ENCODE measurements at regions of chr1 and their contacts with region 1.

Region 1: GRCh38 chr1:1115786-1116700 is at the start of gene C1orf159:
- ATAC-seq: peak; percentile 96 to 98 (median 97)
- H3K4me3 ChIP-seq: peak within 1 kb of the TSS; percentile 61 to 97 (median 77)
- H3K27ac ChIP-seq: peak within 1 kb of the TSS in 1 of 2 donors; percentile 5
- H3K4me1 ChIP-seq: peaks cover 4 to 7% of the 10 kb centered on the region in 2 donors
- total RNA-seq, gene C1orf159: 5.8 to 17.9 (median 9.7) TPM

Region 2: DNA sequence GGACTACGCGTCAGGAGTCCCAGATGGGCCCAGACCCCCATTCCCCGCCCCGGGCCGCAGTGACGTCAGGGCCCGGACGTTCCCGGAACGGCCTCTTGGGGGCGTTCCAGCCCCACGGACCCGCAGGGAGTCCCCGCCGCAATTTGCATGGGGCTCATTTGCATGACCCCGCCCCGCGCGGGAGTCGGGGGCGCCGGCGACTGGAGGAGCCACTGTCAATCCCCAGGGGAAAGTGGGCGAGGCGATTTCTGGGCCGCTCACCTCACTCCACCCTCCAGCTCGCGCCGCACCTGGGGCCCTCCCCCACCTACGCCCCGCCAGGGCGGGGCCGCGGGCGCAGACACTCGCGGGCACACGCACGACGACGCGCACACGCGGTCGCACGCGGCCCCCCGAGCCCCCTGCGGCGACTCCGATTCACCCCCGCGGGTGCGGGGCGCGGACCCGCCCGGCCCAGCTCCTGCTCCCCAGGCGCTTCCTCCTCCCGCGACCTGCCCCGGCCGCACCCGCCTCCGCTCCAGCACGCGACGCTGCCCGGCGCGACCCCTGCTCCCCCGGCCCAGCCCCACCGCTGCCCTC is 82.9 kb before region 1 on chr1:
- in situ Hi-C with region 1: loop called in 1 of 9 experiments (anchors 10 kb)
- ATAC-seq: peak; percentile 81 to 97 (median 85)
- H3K4me3 ChIP-seq: peak overlapping the region; percentile 35 to 53 (median 37)
- H3K27ac ChIP-seq: peak overlapping the region; percentile 30 to 56
- H3K4me1 ChIP-seq: peaks cover 36 to 48% of the 10 kb centered on the region in 2 donors

Region 3: DNA sequence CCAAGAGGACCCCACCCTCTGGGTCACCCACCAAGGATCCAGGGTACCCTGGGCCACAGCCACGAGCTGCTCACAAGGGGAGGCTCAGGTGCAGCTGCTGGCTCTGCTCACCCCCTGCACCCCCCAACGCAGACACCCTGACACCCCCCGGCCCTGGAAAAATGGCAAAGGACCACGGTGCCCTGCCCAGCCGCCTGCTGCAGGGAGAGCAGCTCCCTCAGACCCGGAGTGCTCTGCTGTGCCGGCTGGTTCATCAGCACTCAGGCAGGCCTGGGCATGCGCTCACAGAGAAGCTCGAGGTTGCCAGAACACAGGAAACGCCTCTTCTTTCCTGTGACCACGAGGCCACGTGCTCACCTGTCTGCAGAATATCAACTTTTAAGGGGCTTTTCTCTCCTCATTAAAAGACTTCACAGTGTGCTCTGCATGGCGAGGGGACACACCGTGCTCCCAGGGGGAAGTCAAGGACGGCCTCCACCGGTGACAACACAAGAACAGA is 134.8 kb after region 1 on chr1:
- in situ Hi-C with region 1: loop called in 1 of 9 experiments (anchors 10 kb)
- ATAC-seq: peak in 1 of 8 experiments; percentile 8
- H3K4me3 ChIP-seq: no peak overlapping the region
- H3K27ac ChIP-seq: no peak overlapping the region
- H3K4me1 ChIP-seq: peaks cover 3 to 12% of the 10 kb centered on the region in 2 donors